ENCODE measurements at regions of chr10 and their contacts with region 1.

Region 1: GRCh38 chr10:98748298-98748697 is 301.6 kb upstream of the HPS1 start:
- DNase-seq: peak; percentile 30
- ATAC-seq: no peak
- H3K4me3 ChIP-seq: no peak overlapping the region
- H3K27ac ChIP-seq: no peak overlapping the region
- H3K4me1 ChIP-seq: no peaks in the 10 kb centered on the region
- H3K27me3 ChIP-seq: no peaks in the 10 kb centered on the region
- CTCF ChIP-seq: peak; percentile 44
- EP300 ChIP-seq: no peak
- POLR2A ChIP-seq: no peak
- RAD21 ChIP-seq: no peak

Region 2: DNA sequence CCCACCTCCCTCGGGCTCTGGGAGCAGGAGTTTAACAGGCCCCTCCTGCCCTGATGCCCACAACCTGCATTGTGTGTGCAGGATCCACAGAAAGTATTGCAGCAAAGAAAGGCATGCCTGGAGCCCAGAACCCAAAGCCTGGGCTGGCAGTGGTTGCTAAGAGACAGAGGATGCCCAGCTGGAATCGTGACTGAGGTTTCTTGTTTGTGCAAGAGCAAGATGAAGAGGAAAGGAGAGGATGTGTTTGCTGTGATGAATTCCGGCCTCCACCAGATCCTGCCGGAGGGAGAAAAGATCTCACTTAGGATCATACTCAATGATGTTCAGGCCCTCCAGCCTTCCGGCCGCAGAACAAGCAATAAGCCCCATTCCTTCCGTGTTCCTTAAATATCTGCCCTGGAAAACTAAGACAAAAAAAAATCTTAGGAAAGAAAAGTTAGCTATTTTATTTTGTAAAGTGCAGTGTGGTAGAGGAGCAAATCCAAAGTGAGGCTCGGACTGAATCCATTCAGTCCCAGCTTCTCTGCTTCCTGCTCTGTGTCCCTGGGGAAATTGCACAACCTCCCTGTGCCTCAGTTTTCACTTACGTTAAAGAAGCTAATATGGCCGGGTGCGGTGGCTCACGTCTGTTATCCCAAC is 1619.7 kb before region 1 on chr10:
- CTCF ChIA-PET with region 1: no interaction called
- POLR2A ChIA-PET with region 1: no interaction called
- in situ Hi-C with region 1: no loop called
- intact Hi-C with region 1: no loop called
- DNase-seq: no peak
- ATAC-seq: no peak
- H3K4me3 ChIP-seq: no peak overlapping the region
- H3K27ac ChIP-seq: no peak overlapping the region
- H3K4me1 ChIP-seq: peaks cover under 1% of the 10 kb centered on the region; the same call in 1 of the 2 replicates
- H3K27me3 ChIP-seq: peaks cover 4 to 82% of the 10 kb centered on the region in 2 experiments
- CTCF ChIP-seq: no peak
- EP300 ChIP-seq: no peak
- POLR2A ChIP-seq: no peak
- RAD21 ChIP-seq: no peak

Region 3: GRCh38 chr10:98808282-98808892 is 60.1 kb after region 1 on chr10:
- CTCF ChIA-PET with region 1: no interaction called
- POLR2A ChIA-PET with region 1: no interaction called
- in situ Hi-C with region 1: no loop called
- intact Hi-C with region 1: no loop called
- DNase-seq: no peak
- ATAC-seq: no peak
- H3K4me3 ChIP-seq: no peak overlapping the region
- H3K27ac ChIP-seq: no peak overlapping the region
- H3K4me1 ChIP-seq: no peaks in the 10 kb centered on the region
- H3K27me3 ChIP-seq: no peaks in the 10 kb centered on the region
- CTCF ChIP-seq: no peak
- EP300 ChIP-seq: no peak
- POLR2A ChIP-seq: no peak
- RAD21 ChIP-seq: no peak

Region 4: GRCh38 chr10:99172130-99172738 is 423.9 kb after region 1 on chr10:
- CTCF ChIA-PET with region 1: interaction called, 4 read pairs
- POLR2A ChIA-PET with region 1: no interaction called
- in situ Hi-C with region 1: no loop called
- intact Hi-C with region 1: loop called (anchors 2 kb)
- DNase-seq: peak; percentile 32
- ATAC-seq: peak; percentile 81
- H3K4me3 ChIP-seq: no peak overlapping the region
- H3K27ac ChIP-seq: no peak overlapping the region
- H3K4me1 ChIP-seq: no peaks in the 10 kb centered on the region
- H3K27me3 ChIP-seq: no peaks in the 10 kb centered on the region
- CTCF ChIP-seq: peak; percentile 65
- EP300 ChIP-seq: no peak
- POLR2A ChIP-seq: no peak
- RAD21 ChIP-seq: no peak

Region 5: DNA sequence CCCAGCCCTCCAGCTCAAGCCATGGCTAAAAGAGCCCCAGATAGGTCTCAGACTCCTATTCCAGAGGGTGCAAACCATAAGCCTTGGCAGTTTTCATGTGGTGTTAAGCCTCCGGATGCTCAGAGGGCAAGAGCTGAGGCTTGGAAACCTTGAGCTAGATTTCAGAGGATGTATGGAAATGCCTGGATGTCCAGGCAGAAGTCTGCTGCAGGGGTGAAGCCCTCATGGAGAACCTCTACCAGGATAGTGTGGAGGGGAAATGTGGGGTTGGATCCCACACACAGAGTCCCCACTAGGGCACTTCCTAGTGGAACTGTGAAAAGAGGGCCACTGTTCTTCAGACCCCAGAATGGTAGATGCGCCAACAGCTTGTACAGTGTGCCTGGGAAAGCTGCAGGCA is 500.5 kb after region 1 on chr10:
- CTCF ChIA-PET with region 1: interaction called, 4 read pairs
- POLR2A ChIA-PET with region 1: no interaction called
- in situ Hi-C with region 1: no loop called
- intact Hi-C with region 1: loop called (anchors 10 kb)
- DNase-seq: no peak
- ATAC-seq: no peak
- H3K4me3 ChIP-seq: no peak overlapping the region
- H3K27ac ChIP-seq: no peak overlapping the region
- H3K4me1 ChIP-seq: no peaks in the 10 kb centered on the region
- H3K27me3 ChIP-seq: no peaks in the 10 kb centered on the region
- CTCF ChIP-seq: no peak
- EP300 ChIP-seq: no peak
- POLR2A ChIP-seq: no peak
- RAD21 ChIP-seq: no peak